CD8-positive, alpha-beta T cell (primary cell): ENCODE measurements at regions of chr19 and their contacts with region 1.

Region 1: DNA sequence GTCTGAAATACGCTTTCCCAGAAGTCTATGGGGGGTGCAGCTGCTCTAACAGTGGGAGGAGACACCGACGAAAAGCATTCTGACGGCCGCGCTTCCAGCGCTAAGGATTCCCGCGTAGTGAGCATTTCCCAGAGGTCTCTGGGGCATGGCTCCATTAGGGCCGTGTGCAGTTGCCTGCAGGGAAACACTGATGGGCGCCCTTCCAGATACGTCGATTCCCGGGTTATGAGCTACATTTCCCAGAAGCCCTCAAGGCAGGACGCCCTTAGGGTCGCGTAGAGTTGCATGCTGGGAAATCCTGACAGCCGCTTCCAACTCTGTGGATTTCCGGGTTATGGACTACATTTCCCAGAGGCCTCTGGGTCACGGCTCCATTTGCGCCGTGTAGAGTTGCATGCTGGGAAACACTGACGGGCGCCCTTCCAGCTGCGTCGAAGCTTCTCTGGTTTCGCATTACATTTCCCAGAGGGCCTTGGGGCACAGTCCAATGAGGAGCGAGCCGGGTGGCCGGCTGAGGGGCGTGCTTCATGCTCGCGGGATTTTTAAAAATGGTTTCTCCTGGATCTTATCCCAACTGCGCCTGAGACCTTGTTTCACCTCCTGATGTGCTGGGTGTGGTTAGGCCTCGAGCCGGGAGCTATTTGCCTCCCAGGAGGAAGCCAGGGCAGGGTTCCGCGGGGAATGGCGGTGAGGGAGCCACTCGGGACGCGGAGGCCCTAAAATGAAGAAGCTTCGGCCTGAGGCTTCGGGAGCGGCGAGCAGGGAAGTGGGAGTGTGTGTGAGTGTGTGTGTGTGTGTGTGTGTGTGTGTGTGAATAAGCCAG is 17.2 kb upstream of the ZNF331 start:
- DNase-seq: peak; percentile 77 to 97 (median 85)
- ATAC-seq: peak; percentile 99
- H3K4me3 ChIP-seq: peak overlapping the region; percentile 54 to 63
- H3K4me3 Mint-ChIP-seq: peak overlapping the region; percentile 94
- H3K27ac ChIP-seq: peak overlapping the region; percentile 26 to 78
- H3K27ac Mint-ChIP-seq: peak overlapping the region; percentile 92
- H3K4me1 ChIP-seq: peaks cover 12% of the 10 kb centered on the region
- H3K4me1 Mint-ChIP-seq: peaks cover 17% of the 10 kb centered on the region
- H3K27me3 ChIP-seq: no peaks in the 10 kb centered on the region
- H3K27me3 Mint-ChIP-seq: no peaks in the 10 kb centered on the region
- CTCF ChIP-seq: no peak

Region 2: DNA sequence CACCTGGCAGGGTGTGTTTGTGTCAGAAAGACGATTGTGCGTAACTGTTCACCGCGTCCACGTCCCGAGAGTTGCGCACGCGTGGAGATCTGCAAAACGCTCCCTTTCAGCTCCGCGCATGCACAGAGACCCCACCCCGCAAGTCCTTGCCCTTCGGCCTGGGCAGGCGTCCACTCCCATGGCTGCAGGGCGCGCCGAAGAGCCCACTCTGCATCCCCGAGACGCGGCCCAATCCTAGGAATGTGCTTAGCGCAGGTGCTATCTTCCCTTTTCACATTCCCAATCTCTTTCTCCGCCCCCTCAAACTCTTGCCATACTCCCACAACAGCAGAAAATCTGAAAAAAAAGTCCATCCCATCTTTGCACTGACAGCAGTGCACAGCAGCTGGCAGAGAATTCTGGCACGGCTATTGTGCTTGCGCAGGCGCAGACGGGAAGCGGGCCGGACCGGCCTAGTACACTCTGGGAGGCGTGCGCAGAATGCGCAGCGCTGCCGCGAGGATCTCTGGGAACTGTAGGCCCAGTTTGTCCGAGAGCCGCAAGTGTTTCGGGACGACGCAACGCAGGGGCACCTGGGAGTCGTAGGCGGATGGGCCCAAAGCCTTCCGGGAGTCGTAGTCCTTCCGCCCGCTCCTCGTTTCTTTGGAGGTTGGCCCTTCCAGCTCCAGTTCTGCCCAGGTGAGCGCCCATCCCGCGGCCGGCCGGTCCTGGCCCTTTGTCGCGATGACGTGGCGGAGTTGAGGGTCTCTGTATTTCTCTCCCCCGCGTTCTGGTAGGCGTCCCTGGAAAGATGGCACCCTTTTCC is 1926.6 kb before region 1 on chr19:
- CTCF ChIA-PET with region 1: no interaction called
- POLR2A ChIA-PET with region 1: no interaction called
- intact Hi-C with region 1: loop called (anchors 2 to 5 kb)
- DNase-seq: peak; percentile 86 to 97 (median 96)
- ATAC-seq: peak; percentile 100
- H3K4me3 ChIP-seq: peak overlapping the region; percentile 69 to 98
- H3K4me3 Mint-ChIP-seq: peak overlapping the region; percentile 99
- H3K27ac ChIP-seq: peak overlapping the region; percentile 50 to 73
- H3K27ac Mint-ChIP-seq: peak overlapping the region; percentile 87
- H3K4me1 ChIP-seq: peaks cover 18% of the 10 kb centered on the region
- H3K4me1 Mint-ChIP-seq: peaks cover 27% of the 10 kb centered on the region
- H3K27me3 ChIP-seq: no peaks in the 10 kb centered on the region
- H3K27me3 Mint-ChIP-seq: peaks cover 10% of the 10 kb centered on the region
- CTCF ChIP-seq: no peak

Region 3: DNA sequence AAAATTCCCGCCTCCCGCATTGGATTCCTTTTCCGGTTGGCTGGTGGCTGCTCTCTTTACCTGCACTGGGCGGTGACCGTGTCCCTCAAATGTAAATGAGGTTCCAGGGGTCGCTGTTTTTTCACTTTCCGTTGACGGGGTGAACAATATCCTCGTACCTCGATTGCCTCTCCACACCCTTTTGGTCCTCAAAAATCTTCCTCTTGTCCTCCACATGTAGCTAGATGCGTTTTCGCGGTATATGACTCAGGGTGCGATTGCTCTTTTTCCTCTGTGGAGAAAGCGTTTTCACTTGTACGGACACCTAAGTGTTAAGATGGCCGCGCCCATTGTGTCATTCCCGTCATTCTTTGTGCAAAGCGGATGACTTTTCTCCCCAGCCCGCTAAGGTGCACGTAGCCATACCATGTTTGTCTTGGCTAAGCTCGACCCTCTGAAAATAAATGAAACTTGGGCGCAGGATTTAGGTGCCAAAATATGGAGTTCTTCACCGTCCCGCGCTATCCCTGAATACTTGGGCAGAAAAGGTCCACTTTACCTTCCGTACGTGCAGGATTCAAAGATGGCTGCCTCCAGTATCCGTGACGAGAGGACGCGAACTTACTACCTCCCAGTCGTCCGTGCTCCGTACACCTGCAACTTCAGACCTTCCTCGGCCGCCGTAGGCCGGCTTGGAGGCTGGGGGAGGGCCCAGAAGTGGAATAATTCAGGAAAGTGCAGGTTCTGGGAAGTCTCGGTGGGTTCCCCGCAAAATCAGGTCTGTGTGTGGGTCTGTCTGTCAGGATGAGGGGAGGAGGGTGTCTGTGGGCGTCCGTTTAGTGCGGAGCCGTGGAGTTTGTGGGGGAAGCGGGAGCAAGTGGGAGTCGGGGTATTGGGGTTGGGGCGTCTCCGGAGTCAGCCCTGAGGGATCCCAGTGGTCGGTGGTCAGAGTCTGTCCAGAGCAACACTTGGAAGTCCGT is 1593.7 kb before region 1 on chr19 and contains the start of gene ZNF613:
- CTCF ChIA-PET with region 1: no interaction called
- POLR2A ChIA-PET with region 1: no interaction called
- intact Hi-C with region 1: loop called in 1 of 2 experiments (anchors 2 kb)
- DNase-seq: peak; percentile 63 to 92 (median 85)
- ATAC-seq: peak; percentile 86
- H3K4me3 ChIP-seq: peak within 1 kb of the TSS; percentile 88 to 95
- H3K4me3 Mint-ChIP-seq: peak within 1 kb of the TSS; percentile 95
- H3K27ac ChIP-seq: peak within 1 kb of the TSS; percentile 55 to 65
- H3K27ac Mint-ChIP-seq: peak within 1 kb of the TSS; percentile 91
- H3K4me1 ChIP-seq: peaks cover 7% of the 10 kb centered on the region
- H3K4me1 Mint-ChIP-seq: peaks cover 23% of the 10 kb centered on the region
- H3K27me3 ChIP-seq: no peaks in the 10 kb centered on the region
- H3K27me3 Mint-ChIP-seq: no peaks in the 10 kb centered on the region
- CTCF ChIP-seq: no peak
- total RNA-seq, gene ZNF613: 0.58 to 1.1 TPM

Region 4: DNA sequence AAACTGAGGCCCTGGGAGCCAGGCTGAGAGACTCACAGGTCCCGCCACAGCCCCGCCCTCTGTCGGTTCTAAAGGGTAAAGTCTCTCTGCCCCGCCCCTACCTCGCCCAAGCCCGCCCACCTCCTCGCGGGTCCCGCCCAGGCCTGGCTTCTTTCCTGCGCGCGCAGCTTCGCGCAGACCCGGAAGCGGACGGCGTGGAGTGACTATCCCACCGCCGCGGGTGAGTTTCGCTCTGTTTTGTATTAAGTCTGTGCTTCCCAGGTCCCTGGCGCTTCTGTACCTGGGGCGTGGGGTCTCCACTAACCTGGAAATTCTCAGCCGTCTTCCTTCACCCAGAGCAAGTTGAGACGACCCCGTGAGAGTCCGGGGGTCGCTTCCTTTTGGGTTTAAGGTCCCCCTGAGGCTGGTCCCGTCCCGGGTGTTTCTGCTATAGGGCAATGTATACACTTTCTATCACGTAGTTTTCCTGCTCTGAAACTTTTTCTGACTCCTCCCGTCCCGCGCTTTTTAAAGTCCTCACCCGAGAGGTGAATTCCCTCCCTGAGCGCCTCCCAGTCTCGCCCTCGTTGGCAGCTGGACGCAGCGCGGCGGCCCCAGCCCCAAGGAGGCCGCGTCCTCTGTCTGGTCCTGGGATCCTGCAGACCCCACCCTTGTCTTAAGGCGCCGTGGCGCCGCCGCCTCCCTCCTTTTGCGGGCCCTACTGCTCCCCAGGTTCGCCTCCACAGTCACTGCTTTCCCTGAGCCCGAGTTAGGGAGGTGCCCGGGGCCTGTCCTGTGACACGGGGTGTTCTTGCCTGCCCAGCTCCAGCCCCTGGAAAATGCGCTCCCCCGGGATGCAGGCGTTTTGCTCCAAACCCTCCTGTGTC is 125.6 kb before region 1 on chr19 and contains the start of gene ZNF765:
- CTCF ChIA-PET with region 1: no interaction called
- POLR2A ChIA-PET with region 1: no interaction called
- intact Hi-C with region 1: loop called in 1 of 2 experiments (anchors 1 kb)
- DNase-seq: peak; percentile 94 to 99 (median 97)
- ATAC-seq: peak; percentile 99
- H3K4me3 ChIP-seq: peak within 1 kb of the TSS; percentile 86 to 97
- H3K4me3 Mint-ChIP-seq: peak within 1 kb of the TSS; percentile 96
- H3K27ac ChIP-seq: peak within 1 kb of the TSS; percentile 78 to 84
- H3K27ac Mint-ChIP-seq: peak within 1 kb of the TSS; percentile 96
- H3K4me1 ChIP-seq: peaks cover 12% of the 10 kb centered on the region
- H3K4me1 Mint-ChIP-seq: peaks cover 36% of the 10 kb centered on the region
- H3K27me3 ChIP-seq: no peaks in the 10 kb centered on the region
- H3K27me3 Mint-ChIP-seq: no peaks in the 10 kb centered on the region
- CTCF ChIP-seq: peak; percentile 53
- total RNA-seq, gene ZNF765: 9.6 to 12.4 TPM

Region 5: DNA sequence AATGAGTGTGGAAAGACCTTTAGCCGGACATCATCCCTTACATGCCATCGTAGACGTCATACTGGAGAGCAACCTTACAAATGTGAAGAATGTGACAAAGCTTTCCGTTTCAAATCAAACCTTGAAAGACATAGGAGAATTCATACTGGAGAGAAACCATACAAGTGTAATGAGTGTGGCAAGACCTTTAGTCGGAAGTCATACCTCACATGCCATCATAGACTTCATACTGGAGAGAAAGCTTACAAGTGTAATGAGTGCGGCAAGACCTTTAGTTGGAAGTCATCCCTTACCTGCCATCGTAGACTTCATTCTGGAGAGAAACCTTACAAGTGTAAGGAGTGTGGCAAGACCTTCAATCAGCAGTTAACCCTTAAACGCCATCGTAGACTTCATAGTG is 64.9 kb before region 1 on chr19:
- CTCF ChIA-PET with region 1: no interaction called
- POLR2A ChIA-PET with region 1: no interaction called
- intact Hi-C with region 1: no loop called
- DNase-seq: no peak
- ATAC-seq: no peak
- H3K4me3 ChIP-seq: no peak overlapping the region
- H3K4me3 Mint-ChIP-seq: no peak overlapping the region
- H3K27ac ChIP-seq: no peak overlapping the region
- H3K27ac Mint-ChIP-seq: no peak overlapping the region
- H3K4me1 ChIP-seq: no peaks in the 10 kb centered on the region
- H3K4me1 Mint-ChIP-seq: no peaks in the 10 kb centered on the region
- H3K27me3 ChIP-seq: no peaks in the 10 kb centered on the region
- H3K27me3 Mint-ChIP-seq: no peaks in the 10 kb centered on the region
- CTCF ChIP-seq: no peak

Region 6: DNA sequence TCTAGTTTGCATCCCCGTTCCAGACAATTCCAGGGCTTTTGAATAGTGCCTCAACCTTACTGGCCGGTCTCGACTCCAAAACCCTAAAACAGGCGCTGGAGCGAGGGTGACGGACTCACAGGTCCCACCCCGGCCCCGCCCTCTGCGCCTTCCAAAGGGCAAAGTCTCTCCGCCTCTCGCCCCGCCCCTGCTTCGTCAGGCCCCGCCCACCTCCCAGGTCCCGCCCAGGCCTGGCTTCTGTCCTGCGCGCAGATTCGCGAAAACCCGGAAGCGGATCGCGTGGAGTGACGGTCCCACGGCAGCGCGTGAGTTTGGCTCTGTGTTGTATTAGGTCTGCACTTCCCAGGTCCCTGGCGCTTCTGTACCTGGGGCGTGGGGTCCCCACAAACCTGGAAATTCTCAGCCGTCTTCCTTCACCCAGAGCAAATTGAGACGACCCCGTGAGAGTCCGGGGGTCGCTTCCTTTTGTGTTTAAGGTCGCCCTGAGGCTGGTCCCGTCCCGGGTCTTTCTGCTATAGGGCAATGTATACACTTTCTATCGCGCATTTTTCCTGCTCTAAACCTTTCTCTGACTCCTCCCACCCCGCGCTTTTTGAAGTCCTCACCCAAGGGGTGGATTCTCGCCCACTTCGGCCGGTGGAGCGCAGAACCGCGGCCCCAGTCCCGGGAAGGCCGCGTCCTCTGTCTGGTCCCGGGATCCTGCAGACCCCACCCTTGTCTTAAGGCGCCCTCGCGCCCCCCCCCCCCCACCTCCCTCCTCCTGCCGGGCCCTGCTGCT is 53.1 kb before region 1 on chr19 and contains the start of gene ZNF813:
- CTCF ChIA-PET with region 1: no interaction called
- POLR2A ChIA-PET with region 1: no interaction called
- intact Hi-C with region 1: loop called (anchors 1 to 2 kb)
- DNase-seq: peak; percentile 93 to 98 (median 95)
- ATAC-seq: peak; percentile 98
- H3K4me3 ChIP-seq: peak within 1 kb of the TSS; percentile 73 to 91
- H3K4me3 Mint-ChIP-seq: peak within 1 kb of the TSS; percentile 92
- H3K27ac ChIP-seq: peak within 1 kb of the TSS; percentile 64 to 79
- H3K27ac Mint-ChIP-seq: peak within 1 kb of the TSS; percentile 89
- H3K4me1 ChIP-seq: peaks cover 7% of the 10 kb centered on the region
- H3K4me1 Mint-ChIP-seq: peaks cover 26% of the 10 kb centered on the region
- H3K27me3 ChIP-seq: no peaks in the 10 kb centered on the region
- H3K27me3 Mint-ChIP-seq: peaks cover 18% of the 10 kb centered on the region
- CTCF ChIP-seq: no peak
- total RNA-seq, gene ZNF813: 3.8 TPM

Region 7: GRCh38 chr19:53553884-53554791 is 33.4 kb after region 1 on chr19:
- CTCF ChIA-PET with region 1: no interaction called
- POLR2A ChIA-PET with region 1: no interaction called
- intact Hi-C with region 1: loop called in 1 of 2 experiments (anchors 2 kb)
- DNase-seq: peak; percentile 76 to 98 (median 90)
- ATAC-seq: peak; percentile 72
- H3K4me3 ChIP-seq: peak overlapping the region; percentile 58 to 61
- H3K4me3 Mint-ChIP-seq: peak overlapping the region; percentile 96
- H3K27ac ChIP-seq: peak overlapping the region; percentile 93 to 97
- H3K27ac Mint-ChIP-seq: peak overlapping the region; percentile 99
- H3K4me1 ChIP-seq: peaks cover 12% of the 10 kb centered on the region
- H3K4me1 Mint-ChIP-seq: peaks cover 25% of the 10 kb centered on the region
- H3K27me3 ChIP-seq: no peaks in the 10 kb centered on the region
- H3K27me3 Mint-ChIP-seq: no peaks in the 10 kb centered on the region
- CTCF ChIP-seq: no peak